Activated CD4-positive, alpha-beta T cell treated with anti-CD3 and anti-CD28 coated beads for 36 hours (primary cell): ENCODE measurements at regions of chr12 and their contacts with region 1.

Region 1: DNA sequence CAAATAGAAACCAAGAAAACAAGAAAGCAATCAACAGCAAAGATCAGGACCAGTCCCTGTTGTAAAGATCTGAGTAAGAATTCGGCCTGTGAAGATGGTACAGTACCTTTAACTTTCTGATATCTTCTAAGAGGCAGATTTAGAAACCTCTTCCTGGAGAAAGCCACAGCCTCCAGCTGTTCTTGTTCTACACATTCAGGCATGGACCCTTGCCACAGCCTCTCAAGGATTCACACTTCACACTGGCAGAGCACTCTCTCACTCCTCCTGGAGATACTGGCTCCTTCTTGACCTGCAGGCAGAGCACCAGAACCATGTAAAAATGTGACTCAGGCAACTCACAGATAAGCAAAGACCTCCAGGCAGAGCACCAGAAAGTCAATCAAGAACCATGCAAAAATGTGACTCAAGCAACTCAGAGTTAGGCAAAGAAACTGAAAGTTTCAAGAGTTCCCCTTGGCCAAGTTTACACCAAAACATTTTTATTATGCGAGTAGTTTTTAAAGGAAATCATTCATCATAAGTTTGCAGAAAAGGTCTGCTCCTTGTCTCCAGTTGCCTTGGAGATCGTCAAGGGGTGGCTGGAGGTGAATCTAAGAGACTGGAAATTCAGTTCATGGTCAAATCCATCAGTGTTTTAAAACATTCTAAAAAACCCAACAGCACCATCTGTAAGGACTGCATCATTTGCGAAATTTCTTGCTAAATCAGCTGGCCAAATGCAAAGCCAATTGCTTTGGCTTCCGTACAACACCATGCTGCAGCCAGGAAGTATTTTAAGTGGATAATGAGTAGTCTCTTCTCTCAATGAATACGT is 119.3 kb upstream of the MDM1 start:
- DNase-seq: peak; percentile 67
- ATAC-seq: peak; percentile 80
- H3K4me3 Mint-ChIP-seq: peak overlapping the region; percentile 46
- H3K27ac Mint-ChIP-seq: peak overlapping the region; percentile 93
- H3K4me1 Mint-ChIP-seq: peaks cover 87% of the 10 kb centered on the region
- H3K27me3 Mint-ChIP-seq: no peaks in the 10 kb centered on the region

Region 2: GRCh38 chr12:68358532-68359485 is 92.7 kb before region 1 on chr12:
- CTCF ChIA-PET with region 1: interaction called, 11 read pairs
- POLR2A ChIA-PET with region 1: no interaction called
- intact Hi-C with region 1: loop called in 1 of 2 experiments (anchors 2 kb)
- DNase-seq: peak; percentile 78
- ATAC-seq: peak; percentile 80
- H3K4me3 Mint-ChIP-seq: no peak overlapping the region
- H3K27ac Mint-ChIP-seq: peak overlapping the region; percentile 13
- H3K4me1 Mint-ChIP-seq: peaks cover 29% of the 10 kb centered on the region
- H3K27me3 Mint-ChIP-seq: no peaks in the 10 kb centered on the region

Region 3: DNA sequence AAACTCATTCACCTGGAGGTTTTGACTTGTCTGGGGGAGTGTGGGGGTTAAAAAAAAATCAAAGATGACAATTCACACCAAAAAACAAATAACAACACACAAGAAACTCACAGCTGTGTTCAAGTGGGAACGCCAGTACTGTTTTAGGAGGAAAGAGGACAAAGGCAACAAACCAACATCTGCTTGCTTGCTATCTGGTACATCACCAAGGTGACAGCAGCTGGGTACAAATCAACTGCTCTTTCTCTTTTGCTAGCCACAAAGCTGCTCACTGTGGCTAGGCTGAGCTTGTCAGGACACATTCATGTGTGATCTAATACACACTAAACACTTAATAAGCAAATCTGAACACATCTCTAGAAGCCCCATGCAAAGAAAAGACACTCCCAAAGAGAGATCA is 31.2 kb after region 1 on chr12:
- CTCF ChIA-PET with region 1: interaction called, 4 read pairs
- POLR2A ChIA-PET with region 1: interaction called, 3 read pairs
- intact Hi-C with region 1: loop called (anchors 1 kb)
- DNase-seq: peak; percentile 26
- ATAC-seq: peak; percentile 8
- H3K4me3 Mint-ChIP-seq: no peak overlapping the region
- H3K27ac Mint-ChIP-seq: peak overlapping the region; percentile 66
- H3K4me1 Mint-ChIP-seq: peaks cover 40% of the 10 kb centered on the region
- H3K27me3 Mint-ChIP-seq: no peaks in the 10 kb centered on the region

Region 4: DNA sequence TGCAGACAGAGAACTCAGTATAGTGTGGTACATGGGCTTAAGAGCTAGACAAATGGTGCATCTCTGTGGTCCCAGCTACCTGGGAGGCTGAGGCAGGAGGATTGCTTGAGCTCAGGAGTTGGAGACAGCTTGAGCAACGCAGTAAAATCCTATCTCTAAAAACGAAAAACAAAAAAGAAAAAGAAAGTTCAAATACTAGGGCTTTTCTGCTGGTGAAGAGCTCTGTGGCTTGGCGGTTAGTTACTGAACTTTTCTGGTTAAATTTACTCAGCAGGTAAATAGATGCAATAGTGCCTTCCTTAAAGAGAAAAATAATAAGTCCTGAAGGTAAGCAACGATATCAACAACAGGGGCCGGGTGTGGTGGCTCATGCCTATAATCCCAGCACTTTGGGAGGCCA is 127.8 kb after region 1 on chr12:
- CTCF ChIA-PET with region 1: no interaction called
- POLR2A ChIA-PET with region 1: no interaction called
- intact Hi-C with region 1: loop called in 1 of 2 experiments (anchors 5 kb)
- DNase-seq: peak; percentile 19
- ATAC-seq: peak; percentile 58
- H3K4me3 Mint-ChIP-seq: peak overlapping the region; percentile 6
- H3K27ac Mint-ChIP-seq: peak overlapping the region; percentile 33
- H3K4me1 Mint-ChIP-seq: peaks cover 32% of the 10 kb centered on the region
- H3K27me3 Mint-ChIP-seq: no peaks in the 10 kb centered on the region

Region 5: DNA sequence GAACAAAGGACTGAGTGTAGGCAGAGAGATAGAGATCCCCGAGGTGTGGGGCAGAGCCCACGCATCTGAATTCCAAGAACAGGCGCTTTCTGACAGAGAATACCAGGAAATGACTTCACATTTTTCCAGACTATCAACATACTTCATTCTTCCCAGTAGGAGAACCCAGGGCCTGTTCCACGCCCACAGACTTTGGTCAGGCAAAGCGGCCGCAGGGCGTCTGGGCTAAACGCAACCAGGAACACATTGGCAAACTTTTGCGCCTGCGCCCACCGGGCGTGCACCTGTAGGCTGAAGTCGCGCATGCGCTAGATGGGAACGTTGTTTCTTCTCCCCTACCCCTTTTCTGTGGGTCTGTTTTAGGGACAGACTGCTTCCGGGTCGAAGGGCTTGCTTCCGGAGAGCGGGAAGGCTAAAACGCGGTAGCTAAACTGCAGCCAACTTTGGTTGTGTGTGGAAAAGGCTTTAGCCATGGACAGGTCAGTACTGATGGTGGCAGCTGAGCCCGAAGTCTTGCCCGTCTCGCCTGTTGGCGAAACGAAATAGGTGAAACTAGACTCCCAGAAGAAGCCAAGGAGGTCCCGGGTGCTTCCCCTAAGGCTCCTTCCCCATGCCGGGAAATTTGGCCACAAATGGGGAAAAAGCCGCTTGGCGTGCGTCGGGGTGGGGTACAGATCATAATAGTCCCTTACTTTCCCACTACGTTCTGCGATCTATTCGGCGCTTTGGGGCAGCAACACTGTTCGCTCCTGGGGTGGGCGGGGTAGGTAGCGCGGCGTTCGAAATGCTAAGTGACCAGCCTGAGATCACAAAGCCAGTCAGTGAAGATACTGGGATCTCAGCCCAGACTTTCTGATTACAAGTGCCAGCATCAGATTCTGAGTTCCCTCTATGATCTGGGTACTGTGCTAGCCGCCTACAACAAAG is 235.4 kb after region 1 on chr12 and contains the start of gene NUP107:
- CTCF ChIA-PET with region 1: interaction called, 3 read pairs
- POLR2A ChIA-PET with region 1: no interaction called
- intact Hi-C with region 1: loop called in 1 of 2 experiments (anchors 1 kb)
- DNase-seq: peak; percentile 98
- ATAC-seq: peak; percentile 97
- H3K4me3 Mint-ChIP-seq: peak within 1 kb of the TSS; percentile 89
- H3K27ac Mint-ChIP-seq: peak within 1 kb of the TSS; percentile 97
- H3K4me1 Mint-ChIP-seq: peaks cover 34% of the 10 kb centered on the region
- H3K27me3 Mint-ChIP-seq: no peaks in the 10 kb centered on the region
- total RNA-seq, gene NUP107: 136 to 142 TPM